ENCODE measurements at regions of chr5 and their contacts with region 1.

Region 1: DNA sequence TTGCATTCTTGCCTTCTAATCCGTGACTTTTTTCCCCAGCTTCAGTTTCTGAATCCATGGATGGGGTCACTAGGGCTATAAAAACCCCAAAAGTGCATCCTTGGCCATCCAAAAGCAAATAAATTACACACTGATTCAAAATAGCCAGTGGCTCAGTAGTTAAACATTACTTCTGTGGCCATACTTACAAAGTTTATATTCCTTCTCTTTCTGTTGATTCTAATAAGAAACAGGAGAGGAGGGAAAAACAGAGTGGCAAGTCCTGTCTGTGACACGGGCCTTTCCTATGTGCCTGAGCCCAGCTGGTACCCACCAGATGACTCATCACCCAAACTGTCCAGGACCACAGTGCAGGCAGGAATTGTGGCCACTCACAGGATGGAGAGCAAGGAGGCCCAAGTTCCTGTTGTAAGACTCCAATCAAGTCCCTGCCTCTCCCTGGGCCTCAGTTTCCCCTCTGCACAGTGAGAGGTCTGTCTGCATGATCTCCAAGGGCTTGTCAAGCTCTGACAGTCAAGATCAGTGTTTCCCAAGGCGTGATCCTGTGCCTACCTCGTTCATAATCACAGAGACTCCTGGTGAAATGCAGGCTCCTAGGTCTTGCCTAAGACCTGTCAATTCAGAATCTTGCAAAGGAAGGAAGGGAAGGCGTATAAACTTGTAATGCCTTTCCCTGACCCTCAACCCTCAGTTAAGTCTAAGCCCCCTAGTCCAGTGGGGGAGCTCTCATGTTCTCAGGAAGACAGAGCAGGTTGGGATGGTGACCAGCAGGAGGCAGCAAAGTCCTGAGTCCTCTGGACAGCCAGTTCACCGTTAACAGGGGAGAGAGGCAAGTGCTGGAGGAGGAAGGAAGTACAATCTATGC is 29.5 kb downstream of the TNIP1 start:
- DNase-seq: no peak
- H3K4me3 ChIP-seq: no peak overlapping the region
- H3K27ac ChIP-seq: peak overlapping the region in 3 of 4 donors; percentile 32 to 52 (median 36)
- H3K4me1 ChIP-seq: peaks cover 11 to 46% (median 35%) of the 10 kb centered on the region in 4 donors
- H3K27me3 ChIP-seq: no peaks in the 10 kb centered on the region
- CTCF ChIP-seq: peak; percentile 83 to 91 (median 88)
- EP300 ChIP-seq: no peak
- POLR2A ChIP-seq: no peak

Region 2: DNA sequence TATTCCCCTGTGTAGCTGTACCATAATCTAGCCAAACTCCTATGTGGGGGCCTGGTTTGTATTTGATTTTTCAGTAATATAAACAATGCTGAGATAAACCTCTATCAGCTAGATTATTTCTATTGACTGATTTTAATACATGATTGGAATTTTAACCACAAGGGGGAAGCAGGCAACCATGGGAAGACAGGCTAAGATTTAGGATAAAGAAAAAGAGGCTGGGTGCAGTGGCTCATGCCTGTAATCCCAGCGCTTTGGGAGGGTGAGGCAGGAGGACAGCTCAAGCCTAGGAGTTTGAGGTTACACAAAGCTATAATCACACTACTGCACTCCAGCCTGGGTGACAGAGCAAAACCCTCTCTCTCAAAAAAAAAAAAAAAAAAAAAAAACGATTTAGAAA is 49.0 kb before region 1 on chr5:
- intact Hi-C with region 1: loop called (anchors 1 kb)
- DNase-seq: no peak
- H3K4me3 ChIP-seq: no peak overlapping the region
- H3K27ac ChIP-seq: no peak overlapping the region
- H3K4me1 ChIP-seq: peaks cover 49 to 68% (median 64%) of the 10 kb centered on the region in 4 donors
- H3K27me3 ChIP-seq: no peaks in the 10 kb centered on the region
- CTCF ChIP-seq: peak; percentile 51 to 68 (median 66)
- EP300 ChIP-seq: no peak
- POLR2A ChIP-seq: no peak

Region 3: GRCh38 chr5:151115274-151115905 is 64.1 kb after region 1 on chr5:
- intact Hi-C with region 1: loop called (anchors 2 kb)
- DNase-seq: no peak
- H3K4me3 ChIP-seq: no peak overlapping the region
- H3K27ac ChIP-seq: peak overlapping the region in 1 of 4 donors; percentile 16
- H3K4me1 ChIP-seq: peaks cover 8 to 32% (median 25%) of the 10 kb centered on the region in 4 donors
- H3K27me3 ChIP-seq: no peaks in the 10 kb centered on the region
- CTCF ChIP-seq: peak; percentile 95 to 98 (median 95)
- EP300 ChIP-seq: no peak
- POLR2A ChIP-seq: no peak

Region 4: DNA sequence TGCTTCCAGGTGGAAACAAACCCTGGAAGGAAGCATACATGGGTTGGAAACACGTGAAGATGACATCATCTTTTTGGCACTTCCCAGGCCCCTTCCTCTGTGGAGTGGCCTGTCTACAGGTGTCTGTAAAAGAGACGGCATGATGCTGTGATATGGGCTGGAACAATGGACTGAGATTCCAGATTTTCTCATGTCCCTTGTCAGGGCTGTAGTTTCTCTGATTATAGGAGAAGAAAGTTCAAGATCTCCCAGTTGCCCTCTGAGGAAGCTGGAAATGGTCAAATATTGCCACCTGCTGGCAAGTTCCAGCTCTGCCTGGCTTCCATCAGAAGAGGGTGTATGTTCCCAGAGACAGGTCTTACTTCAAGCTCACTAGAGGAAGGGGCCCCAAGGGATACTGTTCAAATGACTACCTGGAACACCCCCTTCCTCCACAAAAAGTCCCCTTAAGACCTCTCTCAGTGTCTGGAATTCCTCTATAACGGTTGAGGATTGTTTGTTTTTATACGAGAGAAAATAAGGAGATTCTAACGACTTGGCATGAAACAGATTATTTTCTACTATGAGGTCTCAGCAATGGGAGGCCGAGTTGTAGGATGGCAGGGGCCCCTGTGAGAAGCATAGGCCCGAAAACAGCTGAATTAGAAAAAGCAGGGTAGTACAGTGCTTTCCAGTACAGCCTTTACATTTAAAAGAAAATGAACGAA is 113.5 kb after region 1 on chr5:
- intact Hi-C with region 1: loop called (anchors 2 kb)
- DNase-seq: no peak
- H3K4me3 ChIP-seq: no peak overlapping the region
- H3K27ac ChIP-seq: no peak overlapping the region
- H3K4me1 ChIP-seq: peaks cover 15 to 41% (median 32%) of the 10 kb centered on the region in 4 donors
- H3K27me3 ChIP-seq: no peaks in the 10 kb centered on the region
- CTCF ChIP-seq: peak; percentile 94 to 95 (median 95)
- EP300 ChIP-seq: no peak
- POLR2A ChIP-seq: no peak

Region 5: DNA sequence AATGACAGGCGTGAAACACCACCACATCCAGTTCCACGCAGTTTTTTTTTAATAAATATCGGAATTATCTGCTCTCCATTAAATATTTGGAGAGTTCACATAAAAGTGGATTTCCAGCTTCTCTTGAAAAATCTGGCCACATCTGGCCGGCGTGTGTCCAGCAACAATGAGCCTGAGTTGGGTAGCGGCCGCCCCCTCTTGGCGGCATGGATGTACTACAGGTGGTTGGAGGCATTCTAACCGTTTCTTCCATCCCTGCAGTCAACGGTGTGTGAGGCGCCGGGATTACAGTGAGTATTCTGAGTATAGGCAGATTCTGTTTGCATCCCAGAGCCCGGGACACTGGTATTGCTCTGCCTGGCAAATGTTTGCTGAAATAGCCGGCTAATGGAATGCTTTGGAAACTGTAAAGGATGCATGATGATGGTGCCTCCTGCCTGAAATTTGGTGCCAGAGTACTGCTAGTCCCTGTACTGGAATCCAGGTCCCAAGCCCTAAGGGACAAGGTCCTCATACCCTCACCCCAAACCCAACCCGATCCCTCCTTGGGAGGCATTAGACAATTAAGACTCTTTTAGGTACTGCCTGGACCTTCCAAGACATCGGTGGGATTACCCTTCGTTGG is 188.1 kb after region 1 on chr5:
- intact Hi-C with region 1: loop called (anchors 10 kb)
- DNase-seq: no peak
- H3K4me3 ChIP-seq: peak overlapping the region; percentile 41 to 48 (median 44)
- H3K27ac ChIP-seq: peak overlapping the region; percentile 81 to 85 (median 83)
- H3K4me1 ChIP-seq: peaks cover 19 to 41% (median 37%) of the 10 kb centered on the region in 4 donors
- H3K27me3 ChIP-seq: no peaks in the 10 kb centered on the region
- CTCF ChIP-seq: peak; percentile 61 to 81 (median 77)
- EP300 ChIP-seq: no peak
- POLR2A ChIP-seq: no peak

Measured in esophagus muscularis mucosa (tissue), 4 donors.